Cardiac septum (tissue), 1 donor: ENCODE measurements at regions of chr11 and their contacts with region 1.

Region 1: GRCh38 chr11:44893846-44894617 is 56.7 kb downstream of the TP53I11 start:
- DNase-seq: no peak

Region 2: DNA sequence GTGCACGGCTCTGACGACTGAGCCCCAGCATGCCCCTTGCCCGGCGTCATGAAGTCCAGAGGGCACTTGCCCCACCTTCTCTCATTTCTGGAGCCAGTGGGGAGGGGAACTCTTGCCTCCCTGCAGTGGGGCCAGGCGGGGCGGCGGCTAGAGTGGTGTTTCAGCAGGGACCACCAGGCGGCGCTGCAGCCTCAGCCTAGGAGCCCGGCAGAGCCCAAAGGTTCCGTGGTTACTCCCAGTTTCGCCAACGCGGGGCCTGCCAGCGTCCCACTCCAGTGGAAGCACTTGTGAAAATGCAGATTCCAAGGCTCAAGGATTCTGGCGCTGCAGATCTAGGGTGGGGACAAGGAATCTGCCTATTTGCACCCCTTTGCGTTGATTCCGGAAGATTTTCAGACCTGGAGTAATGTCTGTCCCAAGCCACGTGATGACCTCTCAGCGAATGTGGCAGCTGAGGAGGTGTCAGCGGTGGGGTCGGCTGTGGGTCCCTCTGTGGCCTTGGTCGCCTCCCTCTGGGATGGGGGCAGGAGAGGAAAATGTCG is 272.8 kb before region 1 on chr11:
- intact Hi-C with region 1: loop called (anchors 5 kb)
- DNase-seq: peak; percentile 91

Region 3: GRCh38 chr11:44775366-44775984 is 118.6 kb before region 1 on chr11:
- intact Hi-C with region 1: loop called (anchors 5 kb)
- DNase-seq: peak; percentile 80

Region 4: GRCh38 chr11:45511361-45511965 is 617.4 kb after region 1 on chr11:
- intact Hi-C with region 1: no loop called
- DNase-seq: no peak